ENCODE measurements at regions of chr18 and their contacts with region 1.

Region 1: GRCh38 chr18:54983041-54983686 is 23.9 kb upstream of the CCDC68 start:
- DNase-seq: no peak
- ATAC-seq: no peak

Region 2: DNA sequence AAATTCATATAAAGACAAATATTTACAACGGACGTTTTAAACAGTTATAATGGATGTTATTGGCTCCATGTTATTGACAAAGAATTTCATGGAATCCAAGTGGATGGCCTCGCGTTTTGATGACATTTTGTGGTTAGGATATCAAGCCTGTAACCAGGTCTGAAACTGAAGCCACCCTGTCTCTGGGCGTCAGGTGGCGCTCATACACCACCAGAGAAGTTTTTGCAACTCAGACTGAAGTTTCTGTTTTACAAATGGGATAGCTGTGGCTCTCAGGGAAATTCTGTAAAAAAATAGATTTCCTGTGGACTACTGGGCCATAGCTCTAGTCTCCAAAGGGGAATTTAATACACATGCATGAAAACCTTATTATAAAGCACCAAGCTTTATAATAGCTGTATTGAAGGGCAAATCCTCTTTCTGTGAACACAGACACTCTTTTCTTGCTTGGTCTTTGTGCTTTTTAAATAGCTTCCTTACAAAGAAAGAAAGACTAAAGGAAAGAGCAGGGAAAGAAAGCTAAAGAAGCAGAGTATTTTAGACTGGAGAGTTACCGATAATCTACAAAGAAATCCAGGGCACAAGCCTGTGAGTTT is 538.7 kb before region 1 on chr18:
- intact Hi-C with region 1: loop called (anchors 5 kb)
- DNase-seq: no peak
- ATAC-seq: no peak

Region 3: DNA sequence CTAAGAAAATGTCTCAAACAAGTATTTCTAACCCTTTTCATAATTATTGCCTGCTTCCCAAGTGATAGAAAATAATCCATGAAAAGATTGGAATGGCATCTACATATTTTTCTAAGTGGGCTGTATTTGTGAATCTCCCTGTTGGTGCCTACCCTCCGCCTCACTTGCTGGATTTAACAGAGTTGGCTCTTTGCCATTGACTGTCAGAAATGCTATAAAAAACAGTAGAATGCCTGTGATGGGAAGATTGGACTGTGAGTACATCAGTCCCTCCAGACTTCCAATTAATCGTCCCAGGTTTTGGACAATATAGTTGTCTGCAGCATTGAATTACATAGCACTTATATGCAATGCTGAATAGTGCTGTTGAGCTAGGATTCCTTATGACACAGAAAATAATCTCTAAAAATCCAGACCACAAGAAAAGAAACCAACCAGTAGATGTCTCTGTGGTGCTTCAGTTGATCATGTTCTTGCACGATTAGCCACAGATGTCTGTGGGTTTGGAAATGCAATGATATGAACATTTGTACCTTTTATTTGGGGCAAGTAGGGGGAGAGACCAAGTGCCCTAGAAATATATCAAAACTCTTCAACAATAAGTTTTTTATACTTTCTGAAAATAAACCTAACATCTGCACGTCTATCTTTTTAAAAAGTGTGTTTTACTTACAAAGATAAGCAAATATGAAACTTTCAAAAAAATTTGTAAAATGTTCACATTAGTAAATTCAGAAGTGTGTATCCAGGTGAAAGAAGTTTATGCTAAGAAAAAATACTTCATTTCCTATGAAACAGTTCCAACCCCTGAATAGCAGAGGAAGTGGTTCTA is 303.6 kb before region 1 on chr18:
- intact Hi-C with region 1: loop called (anchors 2 kb)
- DNase-seq: no peak
- ATAC-seq: peak; percentile 37

Region 4: DNA sequence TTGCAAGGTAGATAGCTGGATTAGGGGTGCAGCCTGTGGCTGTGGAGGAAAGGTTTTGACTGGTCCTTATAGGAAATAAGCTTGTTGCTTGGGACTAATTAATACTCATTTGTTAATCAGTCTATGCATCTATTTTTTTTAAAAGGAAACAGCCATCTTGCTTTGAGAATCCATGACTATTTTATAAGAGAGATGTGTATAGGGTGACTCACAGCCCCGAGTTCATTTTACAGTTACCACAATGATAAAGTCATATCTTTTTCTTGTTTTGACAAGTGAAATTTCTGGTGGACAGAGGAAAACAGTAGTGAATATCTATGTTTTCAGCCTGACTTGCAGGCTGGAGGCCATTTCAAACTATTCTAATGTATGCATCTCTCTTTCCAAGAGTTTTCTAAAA is 169.6 kb after region 1 on chr18:
- intact Hi-C with region 1: no loop called
- DNase-seq: no peak
- ATAC-seq: no peak